ENCODE measurements at regions of chr1 and their contacts with region 1.

Region 1: DNA sequence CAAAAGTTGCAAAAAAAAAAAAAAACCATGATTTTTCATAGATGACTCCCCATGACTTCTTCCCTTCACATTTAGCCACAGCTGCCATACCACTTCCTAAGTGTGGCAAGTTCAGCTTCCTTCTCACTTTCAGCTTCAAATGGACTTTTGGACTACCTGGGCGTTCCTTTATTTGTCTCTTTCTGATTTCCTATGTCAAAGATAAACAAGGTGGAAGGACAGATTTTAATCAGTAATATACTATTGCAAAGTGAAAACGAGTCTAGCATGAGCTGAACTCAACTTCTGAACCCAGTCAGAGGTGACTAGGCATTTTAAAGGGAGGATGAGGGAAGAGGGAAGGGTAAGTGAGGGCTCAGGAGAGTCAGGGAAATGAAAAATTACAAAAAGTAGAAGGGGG is 14.4 kb upstream of the SCCPDH start:
- DNase-seq: no peak
- H3K4me3 Mint-ChIP-seq: no peak overlapping the region
- H3K27ac Mint-ChIP-seq: no peak overlapping the region
- H3K4me1 Mint-ChIP-seq: peaks cover 20% of the 10 kb centered on the region
- H3K27me3 Mint-ChIP-seq: no peaks in the 10 kb centered on the region
- CTCF ChIP-seq: no peak

Region 2: GRCh38 chr1:246699095-246699735 is 10.6 kb before region 1 on chr1:
- CTCF ChIA-PET with region 1: interaction called, 72 read pairs
- POLR2A ChIA-PET with region 1: interaction called, 6 read pairs
- intact Hi-C with region 1: no loop called
- DNase-seq: peak; percentile 98
- H3K4me3 Mint-ChIP-seq: peak overlapping the region; percentile 69
- H3K27ac Mint-ChIP-seq: peak overlapping the region; percentile 76
- H3K4me1 Mint-ChIP-seq: peaks cover 14% of the 10 kb centered on the region
- H3K27me3 Mint-ChIP-seq: no peaks in the 10 kb centered on the region
- CTCF ChIP-seq: peak; percentile 96

Region 3: GRCh38 chr1:246724016-246724730 is 14.3 kb after region 1 on chr1 and contains the start of gene SCCPDH:
- CTCF ChIA-PET with region 1: interaction called, 7 read pairs
- POLR2A ChIA-PET with region 1: interaction called, 19 read pairs
- intact Hi-C with region 1: no loop called
- DNase-seq: peak; percentile 63
- H3K4me3 Mint-ChIP-seq: peak within 1 kb of the TSS; percentile 79
- H3K27ac Mint-ChIP-seq: peak within 1 kb of the TSS; percentile 8
- H3K4me1 Mint-ChIP-seq: peaks cover 10% of the 10 kb centered on the region
- H3K27me3 Mint-ChIP-seq: no peaks in the 10 kb centered on the region
- CTCF ChIP-seq: no peak
- total RNA-seq, gene SCCPDH: 28.4 and 32.2 TPM in 2 replicates